PC-3 (cell line): ENCODE measurements at regions of chr10 and their contacts with region 1.

Region 1: GRCh38 chr10:100923580-100923979 is 10.8 kb downstream of the SLF2 start:
- DNase-seq: peak; percentile 32
- ATAC-seq: peak; percentile 59
- H3K4me3 ChIP-seq: no peak overlapping the region
- H3K27ac ChIP-seq: no peak overlapping the region
- H3K4me1 ChIP-seq: no peaks in the 10 kb centered on the region
- H3K27me3 ChIP-seq: no peaks in the 10 kb centered on the region
- CTCF ChIP-seq: no peak

Region 2: DNA sequence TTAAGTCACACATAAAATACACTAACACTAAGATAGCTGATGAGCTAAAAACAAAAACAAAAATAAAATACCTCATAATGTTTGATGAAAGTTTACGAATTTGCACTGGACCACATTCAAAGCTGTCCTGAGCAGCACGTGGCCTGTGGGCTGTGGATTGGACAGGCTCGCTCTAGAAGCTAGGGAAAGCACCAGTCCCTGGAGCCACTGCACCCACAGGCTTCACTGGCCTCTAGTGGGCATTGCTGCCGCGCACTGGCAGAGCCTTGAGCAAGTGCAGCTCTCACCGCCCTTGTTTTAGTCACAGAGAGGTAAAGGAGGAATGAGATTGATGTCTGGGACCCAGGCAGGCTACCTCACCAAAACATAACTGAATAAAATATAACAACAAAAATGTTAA is 110.6 kb before region 1 on chr10:
- CTCF ChIA-PET with region 1: no interaction called
- POLR2A ChIA-PET with region 1: no interaction called
- intact Hi-C with region 1: no loop called
- DNase-seq: no peak
- ATAC-seq: 0 out of 2 replicates have a peak, but pooled peaks have one; percentile 42
- H3K4me3 ChIP-seq: no peak overlapping the region
- H3K27ac ChIP-seq: no peak overlapping the region
- H3K4me1 ChIP-seq: no peaks in the 10 kb centered on the region
- H3K27me3 ChIP-seq: peaks cover 92% of the 10 kb centered on the region
- CTCF ChIP-seq: no peak; the same call in 1 of the 2 replicates

Region 3: GRCh38 chr10:100976910-100977309 is 53.3 kb after region 1 on chr10:
- CTCF ChIA-PET with region 1: no interaction called
- POLR2A ChIA-PET with region 1: interaction called, 11 read pairs
- intact Hi-C with region 1: no loop called
- DNase-seq: peak; percentile 34
- ATAC-seq: no peak
- H3K4me3 ChIP-seq: no peak overlapping the region
- H3K27ac ChIP-seq: no peak overlapping the region
- H3K4me1 ChIP-seq: 0 out of 2 replicates have a peak, but pooled peaks cover 7% of the 10 kb centered on the region
- H3K27me3 ChIP-seq: no peaks in the 10 kb centered on the region
- CTCF ChIP-seq: no peak

Region 4: DNA sequence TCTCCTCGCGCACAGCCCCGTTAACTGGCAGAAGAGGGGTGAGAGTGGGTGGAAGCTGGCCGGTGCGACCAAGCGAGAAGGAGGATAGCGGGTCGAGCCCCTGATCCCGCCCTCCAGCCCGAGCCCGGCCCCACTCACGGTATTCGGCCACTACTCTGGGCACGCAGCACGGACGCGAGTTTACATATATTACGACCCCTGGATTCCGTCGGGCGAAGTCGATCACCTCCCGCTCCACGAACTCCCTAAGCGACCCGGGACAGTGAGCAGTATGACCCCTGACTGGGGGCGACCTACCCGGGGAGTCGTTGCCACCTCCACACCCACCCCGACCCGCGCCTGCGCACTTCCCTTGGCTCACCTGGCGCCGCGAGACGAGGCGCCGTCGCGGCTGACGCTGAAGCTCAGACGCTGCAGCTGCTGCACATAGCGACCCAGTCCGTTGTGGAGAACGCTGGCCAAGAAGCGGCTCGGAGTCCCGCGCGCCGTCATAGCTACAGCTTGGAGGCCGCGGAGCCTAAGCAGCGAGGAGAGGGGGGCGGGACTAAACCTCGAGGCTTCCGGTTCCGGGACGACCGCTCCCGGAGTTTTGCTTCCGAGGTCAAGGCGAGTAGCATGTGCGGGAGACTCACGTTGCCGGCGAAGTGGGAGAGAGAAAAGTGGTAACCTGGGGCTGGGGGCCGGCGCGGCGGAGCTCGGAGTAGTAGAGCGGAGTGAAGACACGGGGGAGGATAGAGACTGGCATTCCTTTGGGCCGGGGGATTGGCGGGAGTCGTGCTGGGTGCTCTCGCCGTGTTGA is 63.6 kb after region 1 on chr10 and contains the starts of genes MRPL43 and TWNK:
- CTCF ChIA-PET with region 1: no interaction called
- POLR2A ChIA-PET with region 1: no interaction called
- intact Hi-C with region 1: no loop called
- DNase-seq: peak; percentile 72
- ATAC-seq: peak; percentile 85
- H3K4me3 ChIP-seq: peak within 1 kb of the TSS; percentile 99
- H3K27ac ChIP-seq: peak within 1 kb of the TSS; percentile 74
- H3K4me1 ChIP-seq: peaks cover 30% of the 10 kb centered on the region
- H3K27me3 ChIP-seq: no peaks in the 10 kb centered on the region
- CTCF ChIP-seq: no peak
- total RNA-seq, gene MRPL43: 81.0 and 90.5 TPM in 2 replicates
- total RNA-seq, gene TWNK: 7.5 and 8.0 TPM in 2 replicates